Activated B cell treated with CpG ODN at 0.5 μM for 24 hours (primary cell): ENCODE measurements at regions of chr2 and their contacts with region 1.

Region 1: DNA sequence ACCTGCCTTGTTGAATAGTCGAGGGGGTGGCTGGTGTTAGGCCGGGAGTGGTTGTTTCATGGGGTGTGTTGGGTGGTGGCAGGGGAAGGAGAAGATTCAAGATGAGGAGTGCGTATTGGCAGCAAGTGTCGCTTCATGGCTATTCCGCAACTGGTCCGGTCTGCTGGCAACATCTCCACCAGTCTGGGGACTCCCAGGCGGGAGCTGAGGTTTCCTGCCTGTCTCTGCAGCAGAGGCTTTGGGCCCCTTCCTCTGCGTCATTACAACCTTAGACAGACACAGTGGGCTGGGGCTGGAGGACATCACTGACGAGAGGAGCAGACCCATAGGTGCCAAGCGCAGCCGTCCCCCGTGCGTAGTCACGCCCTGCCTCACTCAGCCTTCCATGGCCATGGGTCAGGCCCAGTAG is 64.0 kb upstream of the MCFD2 start:
- DNase-seq: peak; percentile 49
- ATAC-seq: peak; percentile 45
- H3K4me3 Mint-ChIP-seq: peak overlapping the region; percentile 74
- H3K27ac Mint-ChIP-seq: peak overlapping the region; percentile 95
- H3K4me1 Mint-ChIP-seq: peaks cover 89% of the 10 kb centered on the region
- H3K27me3 Mint-ChIP-seq: no peaks in the 10 kb centered on the region
- CTCF ChIP-seq: no peak

Region 2: GRCh38 chr2:46776687-46777327 is 202.8 kb before region 1 on chr2:
- CTCF ChIA-PET with region 1: no interaction called
- POLR2A ChIA-PET with region 1: no interaction called
- intact Hi-C with region 1: no loop called
- DNase-seq: no peak
- ATAC-seq: no peak
- H3K4me3 Mint-ChIP-seq: no peak overlapping the region
- H3K27ac Mint-ChIP-seq: no peak overlapping the region
- H3K4me1 Mint-ChIP-seq: peaks cover 3% of the 10 kb centered on the region
- H3K27me3 Mint-ChIP-seq: peaks cover 6% of the 10 kb centered on the region
- CTCF ChIP-seq: no peak

Region 3: GRCh38 chr2:46943881-46944798 is 35.4 kb before region 1 on chr2:
- CTCF ChIA-PET with region 1: no interaction called
- POLR2A ChIA-PET with region 1: no interaction called
- intact Hi-C with region 1: loop called (anchors 1 kb)
- DNase-seq: peak; percentile 34
- ATAC-seq: peak; percentile 38
- H3K4me3 Mint-ChIP-seq: peak overlapping the region; percentile 100
- H3K27ac Mint-ChIP-seq: peak overlapping the region; percentile 100
- H3K4me1 Mint-ChIP-seq: peaks cover 81% of the 10 kb centered on the region
- H3K27me3 Mint-ChIP-seq: no peaks in the 10 kb centered on the region
- CTCF ChIP-seq: no peak

Region 4: DNA sequence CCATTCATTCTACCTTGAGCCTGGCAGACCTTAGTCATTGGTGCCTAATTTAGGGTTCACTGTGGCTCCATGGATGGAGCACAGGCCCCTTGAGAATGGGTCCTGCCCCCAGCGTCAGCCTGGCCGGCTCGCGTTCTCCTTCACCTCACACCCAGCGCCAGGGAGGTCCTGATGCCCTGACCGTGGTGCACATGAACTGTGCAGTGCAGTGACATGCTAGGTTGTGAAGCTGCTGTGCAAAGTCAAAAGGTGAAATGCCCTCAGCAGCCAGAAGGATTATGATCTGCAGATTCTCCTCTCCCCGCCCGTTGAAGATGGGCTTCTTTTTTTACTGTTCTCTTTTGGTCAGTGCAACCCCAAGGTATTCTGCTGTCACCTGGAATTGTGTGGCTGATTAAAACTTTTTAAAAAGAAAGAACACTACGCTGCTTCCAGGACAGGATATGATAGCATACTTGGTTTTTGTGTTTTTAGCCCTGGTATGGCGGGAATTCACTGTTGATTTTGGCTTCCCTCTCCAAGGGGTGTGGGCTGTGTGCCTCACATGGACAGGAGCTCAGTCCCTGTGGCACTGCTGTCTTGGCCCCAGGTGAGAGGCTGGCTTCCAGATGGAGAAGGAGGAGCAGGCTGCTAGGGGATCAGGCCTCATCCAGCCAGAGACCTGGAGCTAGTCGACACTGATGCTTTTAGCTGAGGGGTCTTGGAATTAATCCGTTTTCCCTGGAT is 14.6 kb before region 1 on chr2:
- CTCF ChIA-PET with region 1: interaction called, 7 read pairs
- POLR2A ChIA-PET with region 1: interaction called, 6 read pairs
- intact Hi-C with region 1: loop called (anchors 2 kb)
- DNase-seq: no peak
- ATAC-seq: no peak
- H3K4me3 Mint-ChIP-seq: no peak overlapping the region
- H3K27ac Mint-ChIP-seq: no peak overlapping the region
- H3K4me1 Mint-ChIP-seq: peaks cover 22% of the 10 kb centered on the region
- H3K27me3 Mint-ChIP-seq: no peaks in the 10 kb centered on the region
- CTCF ChIP-seq: no peak

Region 5: GRCh38 chr2:47842846-47843245 is 863.3 kb after region 1 on chr2:
- CTCF ChIA-PET with region 1: no interaction called
- POLR2A ChIA-PET with region 1: no interaction called
- intact Hi-C with region 1: no loop called
- DNase-seq: no peak
- ATAC-seq: no peak
- H3K4me3 Mint-ChIP-seq: no peak overlapping the region
- H3K27ac Mint-ChIP-seq: peak overlapping the region; percentile 14
- H3K4me1 Mint-ChIP-seq: peaks cover 28% of the 10 kb centered on the region
- H3K27me3 Mint-ChIP-seq: no peaks in the 10 kb centered on the region
- CTCF ChIP-seq: no peak